ENCODE measurements at regions of chr2 and their contacts with region 1.

Region 1: DNA sequence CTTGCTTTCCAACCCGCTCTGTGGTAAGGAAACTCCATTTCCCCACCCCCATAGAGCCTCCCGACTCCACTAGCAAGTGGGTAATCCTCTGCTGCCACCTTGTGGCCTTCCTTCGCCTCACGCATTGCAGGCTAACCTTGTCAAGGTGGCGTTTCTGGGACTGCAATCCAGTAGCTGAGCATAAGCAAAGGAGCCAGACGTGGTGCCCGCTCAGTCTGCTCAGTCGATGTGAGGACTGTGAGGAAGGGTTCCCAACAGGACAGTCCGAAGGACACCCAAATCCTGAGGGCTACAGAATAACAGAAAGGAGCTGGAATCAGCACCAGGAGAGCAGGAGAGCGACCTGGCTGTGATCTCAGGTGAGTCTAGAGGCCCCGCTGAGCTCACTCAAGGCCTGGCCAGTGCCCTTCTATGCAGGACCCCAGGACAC is 144.2 kb downstream of the SUCLG1 start:
- DNase-seq: peak; percentile 81
- ATAC-seq: peak; percentile 99
- H3K4me3 ChIP-seq: no peak overlapping the region
- H3K27ac ChIP-seq: no peak overlapping the region
- H3K4me1 ChIP-seq: no peaks in the 10 kb centered on the region
- H3K27me3 ChIP-seq: no peaks in the 10 kb centered on the region
- CTCF ChIP-seq: peak; percentile 100
- EP300 ChIP-seq: no peak
- POLR2A ChIP-seq: no peak
- RAD21 ChIP-seq: peak; percentile 98

Region 2: DNA sequence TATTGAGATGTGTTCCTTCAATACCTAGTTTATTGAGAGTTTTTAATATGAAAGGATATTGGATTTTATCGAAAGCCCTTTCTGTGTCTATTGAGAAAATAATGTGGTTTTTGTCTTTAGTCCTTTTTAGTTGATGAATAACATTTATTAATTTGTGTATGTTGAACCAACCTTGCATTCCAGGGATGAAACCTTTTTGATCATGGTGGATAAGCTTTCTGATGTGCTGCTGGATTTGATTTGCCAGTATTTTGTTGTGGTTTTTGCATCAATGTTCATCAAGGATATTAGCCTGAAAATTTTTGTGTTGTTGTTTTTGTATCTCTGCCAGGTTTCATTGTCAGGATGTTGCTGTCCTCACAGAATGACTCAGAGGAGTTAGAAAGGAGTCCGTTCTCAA is 1566.3 kb before region 1 on chr2:
- CTCF ChIA-PET with region 1: no interaction called
- POLR2A ChIA-PET with region 1: no interaction called
- in situ Hi-C with region 1: no loop called
- intact Hi-C with region 1: loop called (anchors 5 kb)
- DNase-seq: no peak
- ATAC-seq: no peak
- H3K4me3 ChIP-seq: no peak overlapping the region
- H3K27ac ChIP-seq: no peak overlapping the region
- H3K4me1 ChIP-seq: no peaks in the 10 kb centered on the region
- H3K27me3 ChIP-seq: no peaks in the 10 kb centered on the region
- CTCF ChIP-seq: no peak
- EP300 ChIP-seq: no peak
- POLR2A ChIP-seq: no peak
- RAD21 ChIP-seq: no peak

Region 3: GRCh38 chr2:83782122-83782521 is 532.8 kb before region 1 on chr2:
- CTCF ChIA-PET with region 1: interaction called, 3 read pairs
- POLR2A ChIA-PET with region 1: no interaction called
- in situ Hi-C with region 1: no loop called
- intact Hi-C with region 1: loop called (anchors 5 kb)
- DNase-seq: no peak
- ATAC-seq: no peak
- H3K4me3 ChIP-seq: no peak overlapping the region
- H3K27ac ChIP-seq: no peak overlapping the region
- H3K4me1 ChIP-seq: no peaks in the 10 kb centered on the region
- H3K27me3 ChIP-seq: no peaks in the 10 kb centered on the region
- CTCF ChIP-seq: peak; percentile 42
- EP300 ChIP-seq: no peak
- POLR2A ChIP-seq: no peak
- RAD21 ChIP-seq: no peak

Region 4: DNA sequence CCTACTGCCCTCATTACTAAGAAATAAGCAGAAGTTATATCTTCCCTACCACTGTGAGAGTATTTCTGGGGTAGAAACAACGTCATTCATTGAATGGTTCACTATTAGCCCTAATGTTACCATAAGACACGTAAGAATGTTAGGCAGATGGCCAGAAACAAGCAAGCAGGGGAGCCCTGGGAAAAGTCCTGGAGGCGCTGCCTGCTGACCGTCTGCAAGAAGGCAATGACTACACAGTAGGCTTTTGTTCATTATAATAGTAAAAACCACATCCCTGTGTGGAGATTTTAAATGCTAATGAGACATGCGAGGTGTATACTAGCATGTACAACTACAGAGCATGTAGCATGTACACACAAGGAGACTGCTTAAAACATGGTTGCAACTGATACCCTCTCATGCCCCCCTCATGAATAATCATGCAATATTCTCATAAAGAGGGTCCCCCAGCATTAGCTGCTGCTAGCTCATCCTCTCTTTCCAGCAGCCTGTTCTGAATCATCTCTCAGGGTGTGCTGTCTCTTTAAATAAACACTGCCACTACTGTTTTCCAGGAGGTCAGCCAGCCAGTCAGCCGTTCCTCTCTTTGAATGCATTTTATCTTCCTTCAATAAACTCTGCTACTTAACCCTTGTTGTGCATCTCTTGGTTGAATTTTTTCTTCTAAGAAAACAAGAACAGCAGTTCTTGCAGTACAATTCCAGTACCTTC is 120.6 kb after region 1 on chr2:
- CTCF ChIA-PET with region 1: no interaction called
- POLR2A ChIA-PET with region 1: no interaction called
- in situ Hi-C with region 1: no loop called
- intact Hi-C with region 1: no loop called
- DNase-seq: no peak
- ATAC-seq: no peak
- H3K4me3 ChIP-seq: no peak overlapping the region
- H3K27ac ChIP-seq: no peak overlapping the region
- H3K4me1 ChIP-seq: no peaks in the 10 kb centered on the region
- H3K27me3 ChIP-seq: no peaks in the 10 kb centered on the region
- CTCF ChIP-seq: no peak
- EP300 ChIP-seq: no peak
- POLR2A ChIP-seq: no peak
- RAD21 ChIP-seq: no peak

Region 5: GRCh38 chr2:84459018-84459943 is 144.4 kb after region 1 on chr2 and contains the start of gene SUCLG1:
- CTCF ChIA-PET with region 1: no interaction called
- POLR2A ChIA-PET with region 1: no interaction called
- in situ Hi-C with region 1: no loop called
- intact Hi-C with region 1: no loop called
- DNase-seq: peak; percentile 79
- ATAC-seq: peak; percentile 95
- H3K4me3 ChIP-seq: peak within 1 kb of the TSS; percentile 86 to 92 (median 90)
- H3K27ac ChIP-seq: peak within 1 kb of the TSS; percentile 81
- H3K4me1 ChIP-seq: peaks cover 63% of the 10 kb centered on the region
- H3K27me3 ChIP-seq: no peaks in the 10 kb centered on the region; a peak in 1 of 5 replicates
- CTCF ChIP-seq: no peak
- EP300 ChIP-seq: no peak
- POLR2A ChIP-seq: peak; percentile 64 to 75
- RAD21 ChIP-seq: peak; percentile 43; the same call in 1 of the 2 replicates
- total RNA-seq, gene SUCLG1: 121 and 177 TPM in 2 replicates

Region 6: DNA sequence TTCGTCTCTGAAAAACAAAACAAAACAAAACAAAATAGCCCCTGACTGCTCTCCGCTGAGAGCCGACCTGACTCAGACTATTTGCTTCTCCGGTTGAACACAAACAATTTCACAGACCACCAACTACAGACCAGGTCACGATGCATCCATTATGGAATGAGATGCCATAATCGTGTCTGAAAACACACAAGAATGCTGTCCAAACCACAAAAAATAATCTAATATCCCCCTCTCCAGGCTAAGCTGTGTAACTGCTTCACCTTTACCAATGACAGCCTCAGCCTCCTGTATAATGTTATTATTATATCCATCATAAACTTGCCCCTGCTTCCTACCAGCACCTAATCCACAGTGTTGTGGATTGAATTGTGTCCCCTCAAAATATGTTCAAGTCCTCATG is 316.1 kb after region 1 on chr2:
- CTCF ChIA-PET with region 1: no interaction called
- POLR2A ChIA-PET with region 1: no interaction called
- in situ Hi-C with region 1: no loop called
- intact Hi-C with region 1: loop called (anchors 10 kb)
- DNase-seq: peak; percentile 48
- ATAC-seq: peak; percentile 94
- H3K4me3 ChIP-seq: no peak overlapping the region
- H3K27ac ChIP-seq: no peak overlapping the region
- H3K4me1 ChIP-seq: no peaks in the 10 kb centered on the region
- H3K27me3 ChIP-seq: no peaks in the 10 kb centered on the region
- CTCF ChIP-seq: peak; percentile 78
- EP300 ChIP-seq: no peak
- POLR2A ChIP-seq: no peak
- RAD21 ChIP-seq: peak; percentile 70